ENCODE measurements at regions of chrX and their contacts with region 1.

Region 1: GRCh38 chrX:42519666-42520231 is 258.2 kb downstream of the PPP1R2C start:
- DNase-seq: no peak
- H3K4me3 ChIP-seq: no peak overlapping the region
- H3K27ac ChIP-seq: no peak overlapping the region
- H3K4me1 ChIP-seq: no peaks in the 10 kb centered on the region
- H3K27me3 ChIP-seq: peaks cover 0 to 6% of the 10 kb centered on the region in 2 donors
- CTCF ChIP-seq: no peak
- POLR2A ChIP-seq: no peak

Region 2: GRCh38 chrX:42531441-42531840 is 11.7 kb after region 1 on chrX:
- intact Hi-C with region 1: loop called (anchors 1 kb)
- DNase-seq: no peak
- H3K4me3 ChIP-seq: no peak overlapping the region
- H3K27ac ChIP-seq: no peak overlapping the region
- H3K4me1 ChIP-seq: no peaks in the 10 kb centered on the region
- H3K27me3 ChIP-seq: peaks cover 0 to 10% of the 10 kb centered on the region in 2 donors
- CTCF ChIP-seq: no peak
- POLR2A ChIP-seq: no peak

Measured in breast epithelium (tissue), 4 donors.